Panc1 (cell line): ENCODE measurements at regions of chr10 and their contacts with region 1.

Region 1: DNA sequence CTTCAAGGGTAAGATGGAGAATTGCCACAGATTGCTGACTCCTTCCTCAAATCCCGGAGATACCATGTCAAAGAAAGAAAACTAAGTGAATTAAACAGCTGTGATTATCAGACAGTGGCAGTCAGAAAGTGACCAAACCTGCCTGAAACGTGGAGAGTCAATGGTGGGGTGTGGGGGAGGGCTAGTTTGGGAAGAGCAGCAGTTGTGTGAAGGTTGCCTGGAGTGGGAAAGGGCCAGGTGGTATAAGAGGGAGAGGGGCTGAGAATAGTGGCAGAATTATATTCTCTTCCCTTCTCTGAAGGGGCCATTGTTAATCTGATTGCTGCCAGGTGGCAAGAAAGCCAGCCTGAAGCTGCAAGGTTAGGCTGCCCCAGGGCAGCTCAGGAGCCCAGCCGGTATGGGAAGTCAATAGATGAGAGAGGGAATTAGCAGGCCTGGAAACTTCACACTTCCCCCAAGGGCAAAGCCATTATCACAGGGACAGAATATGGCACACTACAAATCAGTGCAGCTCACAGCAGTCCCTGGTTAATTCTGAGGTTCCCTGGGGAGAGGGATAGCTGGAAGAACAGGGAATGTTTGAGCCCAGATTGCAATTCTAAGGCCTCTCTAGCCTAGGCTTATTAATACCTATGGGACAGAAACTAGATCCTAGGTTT is 83.9 kb upstream of the ITGB1 start:
- DNase-seq: no peak
- ATAC-seq: peak; percentile 65
- H3K4me3 ChIP-seq: no peak overlapping the region
- H3K27ac ChIP-seq: peak overlapping the region; percentile 67
- H3K4me1 ChIP-seq: peaks cover 15% of the 10 kb centered on the region
- H3K27me3 ChIP-seq: no peaks in the 10 kb centered on the region
- CTCF ChIP-seq: no peak

Region 2: GRCh38 chr10:33107953-33108352 is 66.0 kb after region 1 on chr10:
- CTCF ChIA-PET with region 1: interaction called, 20 read pairs
- POLR2A ChIA-PET with region 1: no interaction called
- in situ Hi-C with region 1: no loop called
- intact Hi-C with region 1: no loop called
- DNase-seq: no peak
- ATAC-seq: no peak
- H3K4me3 ChIP-seq: no peak overlapping the region
- H3K27ac ChIP-seq: no peak overlapping the region
- H3K4me1 ChIP-seq: no peaks in the 10 kb centered on the region
- H3K27me3 ChIP-seq: no peaks in the 10 kb centered on the region
- CTCF ChIP-seq: no peak

Region 3: GRCh38 chr10:33143160-33143728 is 101.3 kb after region 1 on chr10:
- CTCF ChIA-PET with region 1: no interaction called
- POLR2A ChIA-PET with region 1: no interaction called
- in situ Hi-C with region 1: no loop called
- intact Hi-C with region 1: no loop called
- DNase-seq: no peak
- ATAC-seq: no peak
- H3K4me3 ChIP-seq: no peak overlapping the region
- H3K27ac ChIP-seq: peak overlapping the region; percentile 54; the same call in 1 of the 2 replicates
- H3K4me1 ChIP-seq: no peaks in the 10 kb centered on the region; the same call in 1 of the 2 replicates
- H3K27me3 ChIP-seq: no peaks in the 10 kb centered on the region
- CTCF ChIP-seq: no peak